ENCODE measurements at regions of chr5 and their contacts with region 1.

Region 1: GRCh38 chr5:147822686-147823491 is 8.6 kb downstream of the SPINK1 start:
- DNase-seq: peak; percentile 95
- H3K4me3 ChIP-seq: no peak overlapping the region
- H3K27ac ChIP-seq: peak overlapping the region; percentile 55
- H3K4me1 ChIP-seq: peaks cover 53% of the 10 kb centered on the region
- H3K27me3 ChIP-seq: no peaks in the 10 kb centered on the region
- CTCF ChIP-seq: peak; percentile 96

Region 2: DNA sequence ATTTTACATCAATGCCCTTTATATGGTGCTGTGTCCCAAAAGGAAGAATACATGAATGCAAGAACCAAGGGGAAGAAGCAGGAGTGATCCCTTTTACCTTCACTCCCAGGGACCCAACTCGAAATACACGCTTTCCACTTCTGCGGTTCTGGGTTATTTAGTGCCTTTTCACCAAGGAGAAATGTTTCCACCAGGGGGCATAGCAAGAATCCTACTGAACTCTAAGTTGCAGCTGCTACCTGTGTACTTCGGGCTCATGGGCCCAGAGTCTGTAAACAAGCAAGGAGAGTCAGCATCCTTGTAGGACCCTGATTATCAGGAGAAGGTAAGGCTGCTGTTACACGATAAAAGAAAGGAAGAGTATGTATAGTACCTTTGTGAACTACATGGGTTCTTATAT is 358.7 kb before region 1 on chr5:
- CTCF ChIA-PET with region 1: interaction called, 6 read pairs
- POLR2A ChIA-PET with region 1: no interaction called
- intact Hi-C with region 1: loop called (anchors 5 kb)
- DNase-seq: peak; percentile 69
- H3K4me3 ChIP-seq: no peak overlapping the region
- H3K27ac ChIP-seq: no peak overlapping the region
- H3K4me1 ChIP-seq: no peaks in the 10 kb centered on the region
- H3K27me3 ChIP-seq: no peaks in the 10 kb centered on the region
- CTCF ChIP-seq: peak; percentile 77

Region 3: DNA sequence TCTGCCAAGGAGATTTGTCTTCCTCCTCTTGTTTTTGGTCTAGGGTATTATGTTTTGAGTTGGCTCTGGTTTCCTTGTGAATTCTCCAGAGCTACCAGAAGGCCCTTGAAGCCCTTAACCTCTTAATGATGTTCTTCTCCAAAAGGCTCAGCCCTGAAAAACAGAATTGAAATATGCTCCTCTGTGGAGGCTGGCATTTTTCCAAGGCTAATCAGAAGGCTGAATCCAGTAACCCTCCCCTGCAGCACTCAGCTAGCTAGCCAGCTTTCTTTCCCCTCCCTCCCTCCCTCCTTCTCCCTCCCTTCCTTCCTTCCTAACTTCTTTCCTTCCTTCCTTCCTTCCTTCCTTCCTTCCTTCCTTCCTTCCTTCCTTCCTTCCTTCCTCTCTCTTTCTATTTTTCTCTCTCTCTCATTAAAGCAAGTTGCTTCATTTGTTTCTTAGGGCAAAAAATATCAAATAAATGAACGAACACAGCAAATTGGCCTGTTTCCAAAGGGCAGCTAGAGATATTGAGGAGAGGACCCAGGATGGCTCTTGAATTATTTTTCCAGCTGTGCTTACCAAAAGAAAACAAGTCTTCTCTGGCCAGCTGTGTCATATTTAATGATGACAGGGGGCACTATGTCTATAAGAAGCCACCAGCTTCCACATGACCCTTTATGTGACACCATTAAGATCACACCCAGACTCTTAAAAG is 79.1 kb before region 1 on chr5:
- CTCF ChIA-PET with region 1: interaction called, 7 read pairs
- POLR2A ChIA-PET with region 1: interaction called, 5 read pairs
- intact Hi-C with region 1: loop called (anchors 1 kb)
- DNase-seq: peak; percentile 99
- H3K4me3 ChIP-seq: no peak overlapping the region
- H3K27ac ChIP-seq: peak overlapping the region; percentile 97
- H3K4me1 ChIP-seq: peaks cover 91% of the 10 kb centered on the region
- H3K27me3 ChIP-seq: no peaks in the 10 kb centered on the region
- CTCF ChIP-seq: peak; percentile 21; the same call in 1 of the 2 replicates

Region 4: DNA sequence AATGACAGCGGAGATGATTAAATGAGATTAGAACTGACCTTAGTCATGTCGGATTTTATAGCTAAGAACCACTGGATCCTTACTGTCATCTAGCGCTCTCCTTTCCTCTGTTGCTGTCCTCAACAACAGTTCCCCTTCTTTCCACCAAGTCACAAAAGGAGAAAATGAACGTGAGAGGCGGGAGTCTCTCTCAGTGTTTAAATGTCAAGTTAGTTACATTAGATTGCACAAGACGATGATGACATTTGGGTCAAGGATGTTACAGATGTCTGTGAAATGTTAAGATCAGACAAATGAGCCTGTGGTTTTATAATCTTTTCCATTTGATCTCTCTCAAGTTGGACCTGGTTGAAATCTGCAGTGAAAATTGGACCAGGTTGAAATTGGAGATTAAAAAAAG is 614.4 kb after region 1 on chr5:
- CTCF ChIA-PET with region 1: no interaction called
- POLR2A ChIA-PET with region 1: no interaction called
- intact Hi-C with region 1: no loop called
- DNase-seq: no peak
- H3K4me3 ChIP-seq: no peak overlapping the region
- H3K27ac ChIP-seq: no peak overlapping the region
- H3K4me1 ChIP-seq: no peaks in the 10 kb centered on the region
- H3K27me3 ChIP-seq: no peaks in the 10 kb centered on the region
- CTCF ChIP-seq: no peak

Measured in A673 (cell line).